HepG2 (cell line): ENCODE measurements at regions of chr6 and their contacts with region 1.

Region 1: DNA sequence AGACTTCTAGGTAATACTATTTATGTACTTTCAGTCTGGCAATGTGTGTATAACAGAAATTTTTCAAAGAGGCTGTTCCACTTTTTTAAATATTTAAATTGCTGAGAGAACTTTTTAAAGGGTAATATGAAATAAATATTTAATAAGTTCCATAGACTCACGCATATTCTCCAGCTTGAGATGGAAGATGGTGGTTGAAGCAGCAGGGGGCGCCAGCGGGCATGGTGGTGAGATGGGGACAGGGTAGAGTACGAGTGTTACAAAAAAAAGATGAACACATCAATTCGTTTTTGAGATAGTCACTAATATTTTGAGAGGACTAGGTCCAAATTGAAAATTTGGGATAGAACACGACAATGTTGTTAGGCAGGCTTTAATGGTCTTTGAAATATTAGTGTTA is 68.4 kb downstream of the RSPO3 start:
- DNase-seq: peak; percentile 41
- ATAC-seq: peak; percentile 83
- H3K4me3 ChIP-seq: no peak overlapping the region
- H3K27ac ChIP-seq: no peak overlapping the region
- H3K4me1 ChIP-seq: no peaks in the 10 kb centered on the region
- H3K27me3 ChIP-seq: no peaks in the 10 kb centered on the region
- CTCF ChIP-seq: peak; percentile 79
- EP300 ChIP-seq: no peak
- POLR2A ChIP-seq: no peak
- RAD21 ChIP-seq: peak; percentile 26; the same call in 1 of the 2 replicates

Region 2: GRCh38 chr6:126804332-126805064 is 382.4 kb before region 1 on chr6:
- CTCF ChIA-PET with region 1: interaction called, 4 read pairs
- POLR2A ChIA-PET with region 1: no interaction called
- in situ Hi-C with region 1: no loop called
- intact Hi-C with region 1: loop called (anchors 5 kb)
- DNase-seq: peak; percentile 51
- ATAC-seq: peak; percentile 95
- H3K4me3 ChIP-seq: no peak overlapping the region
- H3K27ac ChIP-seq: no peak overlapping the region
- H3K4me1 ChIP-seq: no peaks in the 10 kb centered on the region
- H3K27me3 ChIP-seq: no peaks in the 10 kb centered on the region
- CTCF ChIP-seq: peak; percentile 75
- EP300 ChIP-seq: no peak
- POLR2A ChIP-seq: no peak
- RAD21 ChIP-seq: peak; percentile 35; the same call in 1 of the 2 replicates

Region 3: GRCh38 chr6:127266178-127266891 is 79.4 kb after region 1 on chr6 and contains the start of gene RNF146:
- CTCF ChIA-PET with region 1: no interaction called
- POLR2A ChIA-PET with region 1: interaction called, 3 read pairs
- in situ Hi-C with region 1: no loop called
- intact Hi-C with region 1: loop called (anchors 1 kb)
- DNase-seq: peak; percentile 81
- ATAC-seq: peak; percentile 85
- H3K4me3 ChIP-seq: peak within 1 kb of the TSS; percentile 87 to 97 (median 95)
- H3K27ac ChIP-seq: peak within 1 kb of the TSS; percentile 91
- H3K4me1 ChIP-seq: peaks cover 34% of the 10 kb centered on the region
- H3K27me3 ChIP-seq: no peaks in the 10 kb centered on the region; a peak in 1 of 5 replicates
- CTCF ChIP-seq: peak; percentile 92
- EP300 ChIP-seq: no peak
- POLR2A ChIP-seq: no peak
- RAD21 ChIP-seq: peak; percentile 49; the same call in 1 of the 2 replicates
- total RNA-seq, gene RNF146: 18.8 and 22.2 TPM in 2 replicates

Region 4: GRCh38 chr6:127420556-127420955 is 233.7 kb after region 1 on chr6:
- CTCF ChIA-PET with region 1: interaction called, 8 read pairs
- POLR2A ChIA-PET with region 1: no interaction called
- in situ Hi-C with region 1: no loop called
- intact Hi-C with region 1: loop called (anchors 1 kb)
- DNase-seq: peak; percentile 89
- ATAC-seq: peak; percentile 99
- H3K4me3 ChIP-seq: no peak overlapping the region
- H3K27ac ChIP-seq: no peak overlapping the region
- H3K4me1 ChIP-seq: peaks cover 6% of the 10 kb centered on the region; the same call in 1 of the 2 replicates
- H3K27me3 ChIP-seq: no peaks in the 10 kb centered on the region
- CTCF ChIP-seq: peak; percentile 87
- EP300 ChIP-seq: peak in 1 of 2 experiments; percentile 14; a peak in 1 of 4 replicates
- POLR2A ChIP-seq: no peak
- RAD21 ChIP-seq: peak; percentile 45; the same call in 1 of the 2 replicates

Region 5: DNA sequence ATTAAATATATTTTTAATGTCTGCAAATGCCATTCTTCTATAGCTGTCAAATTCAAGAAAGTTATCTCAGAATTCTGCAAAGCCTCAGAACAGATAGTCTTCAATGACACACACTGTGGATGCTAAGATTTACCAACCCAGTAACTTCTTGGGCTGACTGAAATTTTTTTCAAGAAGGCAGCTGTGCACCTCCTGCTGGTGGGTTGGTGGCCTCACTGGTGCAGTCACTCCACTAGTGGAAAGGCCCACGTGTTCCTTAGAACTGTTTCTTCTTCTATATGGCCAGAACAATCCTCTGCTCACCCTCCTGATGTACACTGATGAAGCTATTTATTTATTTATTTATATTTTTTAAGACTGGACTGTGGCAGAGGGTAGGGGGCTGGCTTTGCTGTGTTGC is 360.3 kb after region 1 on chr6:
- CTCF ChIA-PET with region 1: no interaction called
- POLR2A ChIA-PET with region 1: no interaction called
- in situ Hi-C with region 1: no loop called
- intact Hi-C with region 1: loop called (anchors 10 kb)
- DNase-seq: no peak
- ATAC-seq: peak; percentile 69
- H3K4me3 ChIP-seq: no peak overlapping the region
- H3K27ac ChIP-seq: no peak overlapping the region
- H3K4me1 ChIP-seq: no peaks in the 10 kb centered on the region
- H3K27me3 ChIP-seq: no peaks in the 10 kb centered on the region
- CTCF ChIP-seq: peak; percentile 39
- EP300 ChIP-seq: no peak
- POLR2A ChIP-seq: no peak
- RAD21 ChIP-seq: no peak